GM10248 (cell line): ENCODE measurements at regions of chr9 and their contacts with region 1.

Region 1: DNA sequence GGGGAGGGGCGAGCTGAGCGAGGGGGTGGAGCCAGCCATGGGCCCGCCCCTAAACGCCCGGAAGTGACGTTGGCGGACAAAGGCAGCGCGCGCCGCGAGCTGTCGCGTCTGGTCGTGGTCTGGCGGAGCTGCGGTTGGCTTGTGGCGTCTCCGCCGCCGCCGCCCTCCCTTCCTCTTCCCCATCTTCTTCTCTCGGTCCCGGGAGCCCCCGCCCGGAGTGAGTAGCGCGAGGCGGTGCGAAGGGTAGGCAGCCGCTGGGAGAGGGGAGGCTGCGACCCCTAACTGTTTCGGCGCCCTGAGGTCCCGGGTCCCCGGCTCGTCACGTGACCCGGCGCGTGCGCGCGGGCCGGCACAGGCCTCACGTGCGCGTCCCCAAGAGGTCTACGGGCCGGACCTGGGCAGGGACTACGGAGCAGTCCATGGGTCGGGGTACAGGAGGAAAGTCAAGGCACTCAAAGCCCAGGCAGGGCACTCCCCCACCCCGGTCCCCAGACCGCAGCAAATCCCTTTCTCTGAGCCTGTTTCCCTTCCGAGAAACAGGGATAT is at the start of gene NTMT1:
- DNase-seq: peak; percentile 94
- CTCF ChIP-seq: no peak

Region 2: DNA sequence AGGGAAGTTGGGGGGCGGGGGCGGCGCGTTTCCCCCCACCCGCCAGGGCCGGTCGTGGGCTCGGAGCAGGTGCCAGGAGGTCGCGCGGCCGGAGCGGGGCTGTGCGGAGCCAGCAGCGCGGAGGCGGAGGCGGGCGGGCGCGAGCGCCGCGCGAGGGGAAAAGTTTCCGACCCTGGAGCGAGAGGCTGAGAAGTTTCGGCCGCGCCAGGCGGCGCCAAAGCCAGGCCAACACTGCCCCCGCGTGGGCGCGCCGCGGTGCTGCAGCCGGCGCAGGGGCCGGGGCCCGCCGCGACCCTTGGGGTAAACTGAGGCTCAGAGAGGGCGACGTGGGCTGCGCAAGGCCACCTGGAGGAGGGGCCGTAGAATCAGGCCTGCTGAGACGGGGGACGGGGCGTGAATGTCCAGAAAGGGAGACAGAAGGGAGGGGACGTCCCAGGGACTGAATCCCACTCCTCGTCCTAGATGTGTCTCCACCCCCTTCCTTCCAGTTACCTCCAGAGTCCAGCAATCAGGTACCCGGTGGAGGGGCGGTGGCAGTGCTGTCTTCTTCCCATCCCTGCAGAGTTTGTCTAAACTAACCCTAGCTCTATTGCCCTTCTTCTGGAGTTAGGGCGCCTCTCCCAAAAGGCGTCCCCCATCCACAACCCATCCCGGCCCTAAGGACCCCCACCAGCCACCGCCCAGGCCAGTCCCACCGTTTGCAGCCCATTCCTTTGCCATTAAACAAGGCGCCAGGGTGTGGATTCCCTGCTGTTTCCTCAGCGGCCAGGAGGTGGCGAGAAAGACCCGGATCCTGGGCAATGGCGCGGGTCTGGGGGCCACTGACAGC is 15.5 kb before region 1 on chr9:
- CTCF ChIA-PET with region 1: interaction called, 89 read pairs
- POLR2A ChIA-PET with region 1: no interaction called
- DNase-seq: peak; percentile 82
- CTCF ChIP-seq: peak; percentile 97

Region 3: DNA sequence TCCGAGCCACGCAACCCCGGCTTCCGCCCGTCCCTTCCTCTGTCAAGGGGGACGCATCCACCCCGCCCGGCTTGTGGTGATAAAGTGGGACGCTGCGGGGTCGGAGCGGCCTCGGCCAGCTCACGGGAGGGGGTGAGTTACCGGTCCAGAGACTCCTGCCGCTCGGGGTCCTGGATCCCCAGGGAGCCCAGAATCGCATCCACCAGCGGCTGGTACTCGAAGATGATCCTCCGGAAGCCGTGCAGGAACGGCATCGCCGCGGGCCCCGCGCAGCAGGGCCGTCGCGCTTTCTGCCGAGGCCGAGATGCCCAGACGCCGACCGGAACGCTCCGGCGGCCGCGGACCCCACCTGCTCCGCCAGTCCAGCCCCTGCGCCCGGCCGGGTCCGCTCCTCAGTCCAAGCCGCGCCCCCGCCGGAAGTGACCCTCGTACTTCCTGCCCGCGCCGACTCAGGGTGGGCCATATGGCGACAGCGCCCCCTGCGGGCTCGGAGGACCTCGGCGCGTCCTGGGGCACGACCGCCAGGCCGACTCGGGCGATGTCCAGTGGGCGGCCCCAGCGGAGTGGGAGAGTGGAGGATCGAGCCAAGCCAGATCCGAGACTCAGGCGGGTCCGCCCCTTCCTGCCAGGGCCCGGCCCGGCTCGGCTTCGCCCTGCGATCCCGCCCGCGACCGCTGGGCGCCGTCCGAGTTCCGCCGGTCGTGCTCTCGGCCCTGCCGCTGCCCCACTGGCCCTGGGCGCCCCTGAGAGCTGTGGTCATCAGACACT is 15.8 kb after region 1 on chr9 and contains the start of gene ASB6:
- CTCF ChIA-PET with region 1: interaction called, 68 read pairs
- POLR2A ChIA-PET with region 1: interaction called, 5 read pairs
- DNase-seq: peak; percentile 100
- CTCF ChIP-seq: peak; percentile 83